MCF 10A (cell line): ENCODE measurements at regions of chr3 and their contacts with region 1.

Region 1: GRCh38 chr3:71022551-71023335 is 560.8 kb downstream of the FOXP1 start:
- DNase-seq: peak; percentile 36
- H3K4me3 Mint-ChIP-seq: no peak overlapping the region
- H3K27ac Mint-ChIP-seq: peak overlapping the region; percentile 41
- H3K4me1 Mint-ChIP-seq: peaks cover 19% of the 10 kb centered on the region
- H3K27me3 Mint-ChIP-seq: no peaks in the 10 kb centered on the region
- CTCF ChIP-seq: no peak

Region 2: DNA sequence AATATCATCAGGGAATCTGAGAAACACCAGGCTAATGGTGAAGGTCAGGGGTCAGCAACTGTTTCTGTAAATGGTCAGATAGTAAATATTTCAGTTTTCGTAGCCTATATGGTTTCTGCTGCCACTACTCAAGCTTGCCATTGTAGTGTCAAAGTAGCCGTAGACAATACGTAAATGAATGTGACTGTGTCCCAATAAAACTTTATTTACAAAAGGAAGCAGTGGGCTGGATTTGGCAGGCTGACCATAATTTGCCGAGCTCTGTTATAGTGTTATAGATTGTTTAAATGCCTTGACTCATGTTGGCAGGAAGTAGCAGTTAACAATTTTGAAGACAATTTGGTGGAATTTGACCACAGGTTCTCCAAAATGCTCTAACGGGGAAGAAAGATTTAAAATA is 12.6 kb after region 1 on chr3:
- CTCF ChIA-PET with region 1: interaction called, 13 read pairs
- POLR2A ChIA-PET with region 1: interaction called, 4 read pairs
- intact Hi-C with region 1: no loop called
- DNase-seq: peak; percentile 58
- H3K4me3 Mint-ChIP-seq: no peak overlapping the region
- H3K27ac Mint-ChIP-seq: peak overlapping the region; percentile 29
- H3K4me1 Mint-ChIP-seq: peaks cover 13% of the 10 kb centered on the region
- H3K27me3 Mint-ChIP-seq: no peaks in the 10 kb centered on the region
- CTCF ChIP-seq: no peak